Sciatic nerve (tissue), 2 donors: ENCODE measurements at regions of chr18 and their contacts with region 1.

Region 1: GRCh38 chr18:32552421-32553030 is 81.8 kb upstream of the GAREM1 start:
- DNase-seq: peak; percentile 68
- ATAC-seq: peak; percentile 78

Region 2: GRCh38 chr18:32160547-32160946 is 392.0 kb before region 1 on chr18:
- intact Hi-C with region 1: loop called (anchors 5 kb)
- DNase-seq: no peak
- ATAC-seq: no peak

Region 3: GRCh38 chr18:32507093-32507492 is 45.4 kb before region 1 on chr18:
- intact Hi-C with region 1: no loop called
- DNase-seq: no peak
- ATAC-seq: no peak